ENCODE measurements at regions of chr11 and their contacts with region 1.

Region 1: DNA sequence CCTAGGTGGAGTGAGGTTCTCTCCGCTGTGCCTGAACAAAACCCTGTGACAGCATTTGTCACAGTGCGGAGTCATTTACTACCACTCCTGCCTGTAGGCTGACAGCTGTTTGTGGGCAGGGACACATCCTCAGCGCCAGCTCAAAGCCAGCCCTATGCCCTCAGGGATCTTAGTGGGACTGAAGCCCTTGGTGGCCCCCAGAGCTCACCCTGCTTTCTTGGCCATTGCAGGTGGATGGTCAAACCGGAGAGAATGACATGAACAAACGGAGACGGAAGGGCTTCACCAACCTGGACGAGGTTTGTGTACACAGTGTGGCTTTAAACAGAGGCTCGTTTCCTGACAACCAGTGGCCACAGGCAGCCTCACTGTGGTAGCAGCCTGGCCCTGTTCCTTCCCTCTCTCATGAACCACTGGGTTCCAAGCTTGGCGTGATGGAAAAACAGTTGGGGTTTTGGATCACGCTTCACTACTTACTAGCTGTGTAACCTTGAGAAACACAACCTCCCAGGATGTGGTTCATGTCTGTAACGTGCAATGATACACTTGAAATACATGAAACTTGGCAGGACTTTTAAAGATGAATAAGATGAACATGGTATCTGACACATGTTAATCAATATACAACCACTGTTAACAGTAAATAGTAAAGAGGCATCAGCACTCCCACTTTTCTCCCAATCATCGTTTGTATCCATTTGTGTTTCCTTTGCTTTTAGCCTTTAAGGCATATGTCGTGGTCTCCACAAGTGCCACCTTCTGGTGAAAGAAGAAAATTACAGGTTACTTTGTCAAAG is 125.8 kb downstream of the MICAL2 start:
- DNase-seq: peak in 1 of 3 donors; percentile 37
- ATAC-seq: peak; percentile 75
- H3K4me3 ChIP-seq: no peak overlapping the region
- H3K4me1 ChIP-seq: peaks cover 17% of the 10 kb centered on the region
- CTCF ChIP-seq: peak; percentile 41

Region 2: DNA sequence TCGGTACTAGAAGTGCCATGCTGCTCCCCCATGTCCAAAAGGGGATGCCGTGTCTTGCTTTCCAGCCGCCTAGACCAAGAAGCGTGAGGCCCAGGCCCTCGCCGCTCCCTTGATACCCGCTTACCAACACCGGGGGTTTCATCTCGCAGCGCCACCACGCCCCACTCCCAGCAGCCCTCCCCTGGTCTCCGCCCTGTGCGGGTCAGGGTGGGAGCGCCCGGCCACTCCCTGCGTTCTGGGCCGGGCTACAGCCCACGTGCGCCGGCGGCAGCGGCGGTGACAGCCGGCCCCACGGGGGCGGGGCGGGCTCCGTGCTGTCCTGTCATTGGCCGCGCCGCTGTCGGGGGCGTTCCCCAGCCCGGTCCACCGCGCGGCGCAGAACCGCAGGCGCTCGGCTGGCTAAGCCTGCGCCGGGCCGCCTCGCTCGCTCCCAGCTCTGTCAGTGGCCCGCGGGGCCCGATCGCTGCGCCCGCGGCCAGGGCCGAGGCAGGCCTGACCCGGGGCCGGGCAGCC is 125.9 kb before region 1 on chr11 and contains the start of gene MICAL2:
- intact Hi-C with region 1: loop called in 1 of 2 experiments (anchors 10 kb)
- DNase-seq: peak; percentile 91 to 95 (median 94)
- ATAC-seq: peak; percentile 93
- H3K4me3 ChIP-seq: peak within 1 kb of the TSS; percentile 77
- H3K4me1 ChIP-seq: peaks cover 7% of the 10 kb centered on the region
- CTCF ChIP-seq: no peak
- total RNA-seq, gene MICAL2: 263 to 384 (median 312) TPM